OCI-LY7 (cell line): ENCODE measurements at regions of chr9 and their contacts with region 1.

Region 1: GRCh38 chr9:130042833-130043653 is at the start of gene FNBP1:
- DNase-seq: peak; percentile 84
- H3K4me3 ChIP-seq: peak within 1 kb of the TSS; percentile 94
- H3K27ac ChIP-seq: peak within 1 kb of the TSS; percentile 98
- H3K4me1 ChIP-seq: peaks cover 53% of the 10 kb centered on the region
- CTCF ChIP-seq: no peak
- total RNA-seq, gene FNBP1: 93.3 and 117 TPM in 2 replicates

Region 2: GRCh38 chr9:128688512-128689292 is 1354.3 kb before region 1 on chr9 and contains the start of gene SET:
- CTCF ChIA-PET with region 1: no interaction called
- POLR2A ChIA-PET with region 1: no interaction called
- intact Hi-C with region 1: loop called (anchors 10 kb)
- DNase-seq: peak; percentile 96
- H3K4me3 ChIP-seq: peak within 1 kb of the TSS; percentile 92
- H3K27ac ChIP-seq: peak within 1 kb of the TSS; percentile 91
- H3K4me1 ChIP-seq: peaks cover 40% of the 10 kb centered on the region
- CTCF ChIP-seq: no peak
- total RNA-seq, gene SET: 598 and 1,041 TPM in 2 replicates

Region 3: GRCh38 chr9:129884220-129885017 is 158.6 kb before region 1 on chr9:
- CTCF ChIA-PET with region 1: interaction called, 3 read pairs
- POLR2A ChIA-PET with region 1: interaction called, 16 read pairs
- intact Hi-C with region 1: loop called (anchors 1 kb)
- DNase-seq: peak; percentile 97
- H3K4me3 ChIP-seq: peak overlapping the region; percentile 66
- H3K27ac ChIP-seq: peak overlapping the region; percentile 93
- H3K4me1 ChIP-seq: peaks cover 55% of the 10 kb centered on the region
- CTCF ChIP-seq: peak; percentile 31; the same call in 1 of the 2 replicates

Region 4: DNA sequence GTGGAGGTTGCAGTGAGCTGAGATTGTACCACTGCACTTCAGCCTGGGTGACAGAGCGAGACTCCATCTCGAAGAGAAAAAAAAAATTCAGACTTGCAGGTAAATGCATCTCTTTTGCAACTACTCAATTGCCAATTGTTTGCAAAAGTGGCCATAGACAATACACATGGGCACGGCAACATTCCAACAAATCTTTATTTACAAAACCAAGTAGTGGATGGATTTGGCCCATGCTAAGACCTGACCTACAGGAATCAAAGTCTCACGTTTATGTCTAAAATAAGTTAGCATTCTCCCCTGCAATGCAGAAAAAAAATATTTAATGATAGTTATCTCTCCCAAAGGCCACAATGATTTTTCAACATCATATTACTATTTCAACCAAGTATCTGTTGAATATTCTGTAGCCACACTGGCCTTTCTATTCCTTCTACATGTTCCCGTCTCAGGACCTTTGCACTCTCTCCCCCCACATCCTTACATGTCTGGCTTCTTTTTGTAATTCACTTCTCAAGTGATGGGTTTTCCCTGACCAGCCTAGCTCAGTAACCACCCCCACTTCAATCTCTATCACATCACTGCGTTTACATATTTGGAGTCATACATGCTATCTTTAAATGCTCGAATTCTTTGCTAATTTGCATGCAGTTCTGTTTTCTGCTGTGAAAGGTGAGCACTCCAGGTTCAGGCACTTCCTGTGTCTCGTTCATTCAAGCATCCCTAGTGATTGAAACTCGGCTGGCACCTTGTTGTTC is 54.3 kb before region 1 on chr9:
- CTCF ChIA-PET with region 1: interaction called, 3 read pairs
- POLR2A ChIA-PET with region 1: interaction called, 10 read pairs
- intact Hi-C with region 1: loop called (anchors 1 kb)
- DNase-seq: peak; percentile 90
- H3K4me3 ChIP-seq: peak overlapping the region; percentile 62
- H3K27ac ChIP-seq: peak overlapping the region; percentile 96
- H3K4me1 ChIP-seq: peaks cover 82% of the 10 kb centered on the region
- CTCF ChIP-seq: no peak

Region 5: GRCh38 chr9:130029223-130029973 is 13.6 kb before region 1 on chr9:
- CTCF ChIA-PET with region 1: no interaction called
- POLR2A ChIA-PET with region 1: interaction called, 22 read pairs
- intact Hi-C with region 1: no loop called
- DNase-seq: no peak
- H3K4me3 ChIP-seq: no peak overlapping the region
- H3K27ac ChIP-seq: peak overlapping the region; percentile 19
- H3K4me1 ChIP-seq: peaks cover 96% of the 10 kb centered on the region
- CTCF ChIP-seq: no peak